ENCODE measurements at regions of chr3 and their contacts with region 1.

Region 1: DNA sequence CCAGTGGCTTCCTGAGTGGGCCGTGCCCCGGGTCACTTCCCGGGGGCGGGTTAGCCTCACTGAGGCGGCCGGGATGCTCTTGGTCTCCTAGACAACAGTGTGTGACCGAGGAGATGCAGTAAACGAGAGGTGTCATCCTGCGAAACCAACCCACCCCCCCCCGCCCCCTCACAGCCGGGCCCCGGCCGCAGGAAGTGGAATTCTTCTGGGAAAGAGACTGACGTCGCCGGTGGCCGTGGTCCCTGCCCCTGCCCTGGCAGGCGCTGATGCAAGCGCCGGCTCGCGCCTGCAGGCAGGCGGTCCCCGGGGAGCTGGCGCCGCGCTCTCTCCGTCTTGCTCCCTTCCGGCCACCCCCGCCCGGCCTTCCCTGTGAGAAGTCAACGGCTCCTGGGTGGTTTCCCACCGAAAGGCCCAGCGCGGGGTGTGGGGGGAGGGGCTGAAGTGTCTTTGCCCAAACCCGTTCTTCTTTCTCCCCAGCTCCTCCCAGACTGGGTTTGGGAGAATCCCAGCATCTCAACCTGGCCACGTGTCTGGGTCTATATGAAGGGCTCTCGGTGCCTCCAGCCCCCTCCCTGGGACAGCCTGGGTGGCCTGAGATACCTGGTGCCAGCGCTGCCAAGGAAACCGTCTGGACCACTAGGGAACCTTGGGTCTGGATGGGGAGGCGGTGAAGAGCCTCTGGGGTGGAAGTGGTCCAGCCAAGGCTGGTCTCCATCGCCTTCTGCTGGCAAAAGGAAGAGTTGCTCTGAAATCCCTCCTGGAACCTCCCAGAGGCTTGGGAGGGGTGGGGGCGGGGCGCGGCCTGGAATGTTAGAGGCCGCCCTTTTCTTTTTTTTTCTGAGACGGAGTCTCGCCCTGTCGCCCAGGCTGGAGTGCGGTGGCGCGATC is 47.3 kb downstream of the BHLHE40 start:
- DNase-seq: peak; percentile 84
- H3K4me3 Mint-ChIP-seq: peak overlapping the region; percentile 79
- H3K27ac Mint-ChIP-seq: peak overlapping the region; percentile 88
- H3K4me1 Mint-ChIP-seq: peaks cover 51% of the 10 kb centered on the region
- H3K27me3 Mint-ChIP-seq: no peaks in the 10 kb centered on the region

Region 2: DNA sequence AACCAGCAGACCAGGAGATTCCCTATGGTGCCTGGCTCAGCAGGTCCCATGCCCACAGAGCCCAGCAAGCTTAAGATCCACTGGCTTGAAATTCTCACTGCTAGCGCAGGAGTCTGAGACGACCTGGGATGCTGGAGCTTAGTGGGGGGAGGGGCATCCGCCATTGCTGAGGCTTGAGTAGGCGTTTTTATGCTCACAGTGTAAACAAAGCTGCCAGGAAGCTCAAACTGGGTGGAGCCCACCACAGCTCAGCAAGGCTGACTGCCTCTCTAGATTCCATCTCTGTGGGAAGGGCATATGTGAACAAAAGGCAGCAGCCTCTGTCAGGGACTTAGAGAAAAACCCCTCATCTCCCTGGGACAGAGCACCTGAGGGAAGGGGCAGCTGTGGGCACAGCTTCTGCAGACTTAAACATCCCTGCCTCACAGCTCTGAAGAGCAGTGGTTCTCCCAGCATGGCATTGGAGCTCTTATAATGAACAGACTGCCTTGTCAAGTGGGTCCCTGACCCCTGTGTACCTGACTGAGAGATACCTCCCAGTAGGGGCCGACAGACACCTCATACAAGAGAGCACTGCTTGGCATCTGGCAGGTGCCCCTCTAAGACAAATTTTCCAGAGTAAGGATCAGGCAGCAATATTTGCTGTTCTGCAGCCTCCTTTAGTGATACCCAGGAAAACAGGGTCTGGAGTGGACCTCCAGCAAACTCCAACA is 954.9 kb before region 1 on chr3:
- CTCF ChIA-PET with region 1: no interaction called
- POLR2A ChIA-PET with region 1: no interaction called
- intact Hi-C with region 1: no loop called
- DNase-seq: peak; percentile 11
- H3K4me3 Mint-ChIP-seq: no peak overlapping the region
- H3K27ac Mint-ChIP-seq: no peak overlapping the region
- H3K4me1 Mint-ChIP-seq: peaks cover 5% of the 10 kb centered on the region
- H3K27me3 Mint-ChIP-seq: no peaks in the 10 kb centered on the region

Region 3: DNA sequence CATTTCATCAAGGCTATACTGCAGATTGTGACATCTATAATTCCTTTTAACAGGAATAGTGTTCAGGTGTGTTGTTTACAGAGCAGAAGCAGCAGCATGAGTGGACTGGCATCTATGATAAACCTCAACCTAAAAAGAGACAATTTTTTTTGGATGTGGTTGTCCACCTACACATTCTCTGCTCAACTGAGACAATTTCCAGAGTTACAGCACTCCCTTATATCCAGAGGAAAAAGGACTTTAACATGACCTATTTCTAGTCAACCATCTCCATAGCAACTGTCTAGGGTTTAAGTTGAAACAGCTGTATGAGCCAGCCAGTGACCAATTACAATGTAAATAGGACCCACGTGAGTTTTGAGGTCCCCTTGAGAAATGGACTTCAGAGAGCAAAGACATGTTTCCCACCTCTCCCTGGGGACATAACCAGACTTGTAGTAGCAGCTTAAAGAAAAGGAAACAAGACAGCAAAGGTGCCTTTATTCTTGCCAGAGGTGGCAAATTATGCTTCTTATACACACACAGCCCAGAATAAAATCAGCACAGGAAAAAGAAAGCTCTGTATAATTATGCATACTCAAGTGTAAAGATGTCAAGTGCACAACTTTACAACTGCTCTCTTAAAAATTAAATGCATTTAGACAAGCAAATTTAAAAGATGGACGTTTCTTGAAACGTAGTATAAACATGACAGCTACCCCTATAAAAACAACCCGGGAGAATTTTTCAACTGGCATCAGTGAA is 599.8 kb before region 1 on chr3:
- CTCF ChIA-PET with region 1: no interaction called
- POLR2A ChIA-PET with region 1: no interaction called
- intact Hi-C with region 1: loop called (anchors 10 kb)
- DNase-seq: no peak
- H3K4me3 Mint-ChIP-seq: no peak overlapping the region
- H3K27ac Mint-ChIP-seq: no peak overlapping the region
- H3K4me1 Mint-ChIP-seq: peaks cover 33% of the 10 kb centered on the region
- H3K27me3 Mint-ChIP-seq: no peaks in the 10 kb centered on the region

Region 4: GRCh38 chr3:4776980-4777581 is 249.5 kb before region 1 on chr3:
- CTCF ChIA-PET with region 1: no interaction called
- POLR2A ChIA-PET with region 1: no interaction called
- intact Hi-C with region 1: loop called (anchors 1 kb)
- DNase-seq: peak; percentile 45
- H3K4me3 Mint-ChIP-seq: peak overlapping the region; percentile 47
- H3K27ac Mint-ChIP-seq: peak overlapping the region; percentile 91
- H3K4me1 Mint-ChIP-seq: peaks cover 37% of the 10 kb centered on the region
- H3K27me3 Mint-ChIP-seq: no peaks in the 10 kb centered on the region

Region 5: GRCh38 chr3:4845882-4846281 is 180.7 kb before region 1 on chr3:
- CTCF ChIA-PET with region 1: interaction called, 3 read pairs
- POLR2A ChIA-PET with region 1: interaction called, 14 read pairs
- intact Hi-C with region 1: loop called (anchors 1 kb)
- DNase-seq: no peak
- H3K4me3 Mint-ChIP-seq: peak overlapping the region; percentile 14
- H3K27ac Mint-ChIP-seq: peak overlapping the region; percentile 83
- H3K4me1 Mint-ChIP-seq: peaks cover 96% of the 10 kb centered on the region
- H3K27me3 Mint-ChIP-seq: no peaks in the 10 kb centered on the region

Region 6: DNA sequence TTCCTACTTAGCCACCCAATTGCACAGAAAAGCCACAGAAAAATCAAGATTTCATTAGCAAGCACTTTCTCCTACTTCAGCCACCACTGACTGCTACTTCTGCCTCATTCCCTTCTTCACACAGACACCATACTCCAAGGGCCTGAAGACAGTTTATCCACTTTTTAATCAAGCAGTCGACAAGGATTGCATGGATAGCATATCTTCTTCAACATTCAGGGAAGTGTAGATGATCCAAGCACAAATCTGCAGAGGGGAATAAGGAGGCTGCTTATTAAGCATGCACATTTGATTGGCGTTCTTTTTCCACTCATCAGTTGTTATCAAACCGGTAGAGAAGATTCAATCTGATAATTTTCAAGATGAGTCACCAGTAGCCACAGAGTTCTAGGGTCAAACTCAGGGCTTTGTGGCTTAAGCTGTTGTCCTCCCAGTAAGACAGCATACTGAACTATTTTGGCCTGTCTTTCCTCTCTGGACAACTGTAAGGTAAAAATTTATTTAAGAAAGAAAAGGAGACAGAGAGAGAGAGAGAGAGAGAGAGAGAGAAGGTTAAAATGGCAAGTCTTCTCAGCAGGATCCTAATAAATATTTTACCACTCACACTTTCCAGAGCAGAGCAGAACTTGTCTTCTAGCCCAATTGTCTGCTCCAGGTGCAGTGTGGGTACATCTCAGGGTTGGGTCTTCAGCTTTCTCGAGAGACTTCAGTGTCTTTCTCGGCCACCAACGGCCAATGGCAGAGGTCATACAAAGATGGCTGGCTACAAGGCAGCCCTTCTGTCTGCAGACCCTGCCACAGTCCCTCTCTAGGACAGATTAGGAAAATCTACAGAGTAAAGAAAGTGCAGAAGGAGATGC is 127.9 kb before region 1 on chr3:
- CTCF ChIA-PET with region 1: no interaction called
- POLR2A ChIA-PET with region 1: no interaction called
- intact Hi-C with region 1: loop called (anchors 2 kb)
- DNase-seq: peak; percentile 25
- H3K4me3 Mint-ChIP-seq: peak overlapping the region; percentile 51
- H3K27ac Mint-ChIP-seq: peak overlapping the region; percentile 79
- H3K4me1 Mint-ChIP-seq: peaks cover 52% of the 10 kb centered on the region
- H3K27me3 Mint-ChIP-seq: no peaks in the 10 kb centered on the region

Region 7: GRCh38 chr3:5006755-5007202 is 19.8 kb before region 1 on chr3:
- CTCF ChIA-PET with region 1: interaction called, 17 read pairs
- POLR2A ChIA-PET with region 1: interaction called, 24 read pairs
- intact Hi-C with region 1: loop called (anchors 1 kb)
- DNase-seq: peak; percentile 94
- H3K4me3 Mint-ChIP-seq: peak overlapping the region; percentile 25
- H3K27ac Mint-ChIP-seq: peak overlapping the region; percentile 81
- H3K4me1 Mint-ChIP-seq: peaks cover 52% of the 10 kb centered on the region
- H3K27me3 Mint-ChIP-seq: no peaks in the 10 kb centered on the region

Region 8: DNA sequence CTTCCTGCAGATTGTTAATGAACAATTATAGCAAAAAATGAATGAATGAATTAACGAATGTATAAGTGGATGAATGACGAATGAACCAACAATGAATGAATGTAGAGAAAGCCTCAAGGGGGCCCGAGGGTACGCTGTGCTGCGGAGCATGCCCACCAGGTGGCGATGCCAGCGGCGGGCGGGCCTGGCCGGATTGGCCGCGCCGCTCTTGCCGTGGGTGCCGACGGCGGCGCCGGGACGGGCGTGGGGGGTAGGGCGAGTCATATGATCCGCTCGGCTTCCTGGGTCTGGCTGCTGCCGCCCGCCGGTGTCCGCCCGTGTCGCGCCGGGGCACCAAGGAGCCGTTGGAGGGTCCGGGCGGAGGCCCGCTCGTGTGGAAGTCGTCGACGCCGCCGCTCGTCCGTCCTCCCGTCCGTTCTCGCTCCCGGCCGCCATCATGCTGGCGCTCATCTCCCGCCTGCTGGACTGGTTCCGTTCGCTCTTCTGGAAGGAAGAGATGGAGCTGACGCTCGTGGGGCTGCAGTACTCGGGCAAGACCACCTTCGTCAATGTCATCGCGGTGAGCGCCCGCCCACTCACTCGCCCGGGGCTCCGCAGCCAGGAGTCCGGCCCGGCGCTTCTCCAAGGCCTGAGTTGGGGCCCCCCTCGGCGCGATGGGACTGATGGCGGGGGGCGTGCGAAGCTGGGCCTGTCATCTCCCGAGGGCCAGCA is 95.6 kb after region 1 on chr3 and contains the start of gene ARL8B:
- CTCF ChIA-PET with region 1: no interaction called
- POLR2A ChIA-PET with region 1: no interaction called
- intact Hi-C with region 1: loop called (anchors 1 kb)
- DNase-seq: peak; percentile 95
- H3K4me3 Mint-ChIP-seq: peak within 1 kb of the TSS; percentile 85
- H3K27ac Mint-ChIP-seq: peak within 1 kb of the TSS; percentile 92
- H3K4me1 Mint-ChIP-seq: peaks cover 41% of the 10 kb centered on the region
- H3K27me3 Mint-ChIP-seq: no peaks in the 10 kb centered on the region
- total RNA-seq, gene ARL8B: 55.4 to 58.5 TPM

Measured in activated CD4-positive, alpha-beta memory T cell treated with anti-CD3 and anti-CD28 coated beads for 36 hours (primary cell).